ENCODE measurements at regions of chr1 and their contacts with region 1.

Region 1: GRCh38 chr1:205919026-205919746 is 24.1 kb downstream of the SLC26A9 start:
- DNase-seq: peak; percentile 84
- H3K4me3 Mint-ChIP-seq: no peak overlapping the region
- H3K27ac Mint-ChIP-seq: no peak overlapping the region
- H3K4me1 Mint-ChIP-seq: no peaks in the 10 kb centered on the region
- H3K27me3 Mint-ChIP-seq: no peaks in the 10 kb centered on the region

Region 2: DNA sequence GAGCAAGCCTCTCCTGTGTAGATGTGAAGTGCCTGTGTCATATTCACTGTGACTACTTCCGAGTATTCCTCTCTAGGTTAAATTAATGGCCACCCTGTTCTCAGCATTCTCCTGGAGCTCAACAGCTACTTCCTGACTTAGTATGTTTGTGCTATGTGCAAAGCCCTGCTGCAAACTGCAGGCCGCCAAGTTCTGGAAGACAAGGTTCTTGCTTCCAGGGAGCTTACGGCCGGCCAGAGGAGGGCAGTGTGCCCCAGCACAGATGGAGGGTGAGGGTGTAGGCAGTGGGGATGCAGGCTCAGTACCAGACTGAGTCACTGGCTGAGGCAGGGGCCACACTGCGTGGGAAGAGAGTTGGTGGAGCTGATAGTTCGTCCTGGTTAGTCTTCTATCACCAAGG is 330.6 kb before region 1 on chr1:
- CTCF ChIA-PET with region 1: no interaction called
- POLR2A ChIA-PET with region 1: no interaction called
- intact Hi-C with region 1: no loop called
- DNase-seq: peak; percentile 60
- H3K4me3 Mint-ChIP-seq: no peak overlapping the region
- H3K27ac Mint-ChIP-seq: no peak overlapping the region
- H3K4me1 Mint-ChIP-seq: peaks cover 13% of the 10 kb centered on the region
- H3K27me3 Mint-ChIP-seq: no peaks in the 10 kb centered on the region

Region 3: DNA sequence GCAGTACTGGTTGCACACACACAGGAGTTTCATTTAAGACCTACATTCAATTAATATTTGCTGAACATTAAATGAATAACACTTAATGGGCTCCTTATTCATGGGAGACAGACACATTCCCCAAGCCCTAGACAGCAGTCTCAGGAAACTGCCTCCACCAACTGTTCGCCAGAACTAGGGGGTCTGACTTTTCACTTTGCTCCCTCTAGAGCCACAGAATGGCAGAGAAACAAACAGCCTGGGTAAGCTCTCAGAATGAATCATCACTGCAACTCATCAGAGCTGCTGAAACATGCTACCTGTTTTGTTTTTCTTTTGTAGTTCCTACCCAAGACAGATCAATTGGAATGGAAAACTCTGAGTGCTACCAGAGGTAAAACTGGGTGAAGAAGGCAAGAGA is 319.1 kb before region 1 on chr1:
- CTCF ChIA-PET with region 1: no interaction called
- POLR2A ChIA-PET with region 1: no interaction called
- intact Hi-C with region 1: no loop called
- DNase-seq: peak; percentile 36
- H3K4me3 Mint-ChIP-seq: no peak overlapping the region
- H3K27ac Mint-ChIP-seq: peak overlapping the region; percentile 77
- H3K4me1 Mint-ChIP-seq: peaks cover 31% of the 10 kb centered on the region
- H3K27me3 Mint-ChIP-seq: no peaks in the 10 kb centered on the region

Region 4: GRCh38 chr1:205693421-205693991 is 225.7 kb before region 1 on chr1:
- CTCF ChIA-PET with region 1: no interaction called
- POLR2A ChIA-PET with region 1: no interaction called
- intact Hi-C with region 1: no loop called
- DNase-seq: no peak
- H3K4me3 Mint-ChIP-seq: no peak overlapping the region
- H3K27ac Mint-ChIP-seq: no peak overlapping the region
- H3K4me1 Mint-ChIP-seq: no peaks in the 10 kb centered on the region
- H3K27me3 Mint-ChIP-seq: peaks cover 17% of the 10 kb centered on the region

Region 5: DNA sequence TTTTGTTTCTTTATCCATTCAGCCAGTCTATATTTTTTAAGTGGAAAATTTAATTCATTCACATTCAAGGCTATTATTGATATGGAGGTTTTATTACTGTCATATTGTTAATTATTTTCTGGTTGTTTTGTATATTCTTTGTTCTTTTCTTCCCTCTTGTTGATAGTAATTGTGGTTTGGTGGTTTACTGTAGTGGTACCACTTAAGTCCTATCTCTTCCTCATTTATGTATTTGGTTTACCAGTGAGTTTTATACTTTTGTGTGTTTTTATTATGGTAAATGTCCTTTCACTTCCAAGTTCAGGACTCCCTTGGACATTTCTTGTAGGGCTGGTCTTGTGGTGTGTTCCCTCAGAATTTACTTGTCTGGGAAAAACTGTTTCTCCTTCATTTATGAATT is 41.2 kb before region 1 on chr1:
- CTCF ChIA-PET with region 1: no interaction called
- POLR2A ChIA-PET with region 1: no interaction called
- intact Hi-C with region 1: no loop called
- DNase-seq: no peak
- H3K4me3 Mint-ChIP-seq: no peak overlapping the region
- H3K27ac Mint-ChIP-seq: no peak overlapping the region
- H3K4me1 Mint-ChIP-seq: no peaks in the 10 kb centered on the region
- H3K27me3 Mint-ChIP-seq: peaks cover 6% of the 10 kb centered on the region

Region 6: DNA sequence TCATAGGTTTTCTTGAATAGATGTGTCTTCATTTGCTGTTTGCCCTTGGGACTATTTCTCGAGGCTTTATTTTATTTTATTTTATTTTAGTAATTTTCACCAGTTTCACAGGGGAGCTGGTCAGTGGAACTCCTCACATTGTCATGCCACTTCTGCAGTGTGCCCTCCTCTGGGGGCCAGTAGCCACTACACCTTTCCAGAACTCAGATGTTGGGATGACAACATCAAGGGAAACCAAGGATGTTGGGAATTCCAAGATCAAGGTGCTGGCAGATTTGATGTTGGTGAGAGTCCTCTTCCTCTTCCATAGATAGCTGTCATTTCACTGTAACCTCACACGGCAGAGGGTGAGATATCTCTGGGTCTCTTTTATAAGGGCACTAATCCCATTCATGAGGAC is 11.4 kb before region 1 on chr1:
- CTCF ChIA-PET with region 1: interaction called, 15 read pairs
- POLR2A ChIA-PET with region 1: no interaction called
- intact Hi-C with region 1: no loop called
- DNase-seq: no peak
- H3K4me3 Mint-ChIP-seq: no peak overlapping the region
- H3K27ac Mint-ChIP-seq: no peak overlapping the region
- H3K4me1 Mint-ChIP-seq: no peaks in the 10 kb centered on the region
- H3K27me3 Mint-ChIP-seq: no peaks in the 10 kb centered on the region

Measured in activated CD4-positive, alpha-beta memory T cell treated with anti-CD3 and anti-CD28 coated beads for 36 hours (primary cell).